ENCODE measurements at regions of chr10 and their contacts with region 1.

Region 1: DNA sequence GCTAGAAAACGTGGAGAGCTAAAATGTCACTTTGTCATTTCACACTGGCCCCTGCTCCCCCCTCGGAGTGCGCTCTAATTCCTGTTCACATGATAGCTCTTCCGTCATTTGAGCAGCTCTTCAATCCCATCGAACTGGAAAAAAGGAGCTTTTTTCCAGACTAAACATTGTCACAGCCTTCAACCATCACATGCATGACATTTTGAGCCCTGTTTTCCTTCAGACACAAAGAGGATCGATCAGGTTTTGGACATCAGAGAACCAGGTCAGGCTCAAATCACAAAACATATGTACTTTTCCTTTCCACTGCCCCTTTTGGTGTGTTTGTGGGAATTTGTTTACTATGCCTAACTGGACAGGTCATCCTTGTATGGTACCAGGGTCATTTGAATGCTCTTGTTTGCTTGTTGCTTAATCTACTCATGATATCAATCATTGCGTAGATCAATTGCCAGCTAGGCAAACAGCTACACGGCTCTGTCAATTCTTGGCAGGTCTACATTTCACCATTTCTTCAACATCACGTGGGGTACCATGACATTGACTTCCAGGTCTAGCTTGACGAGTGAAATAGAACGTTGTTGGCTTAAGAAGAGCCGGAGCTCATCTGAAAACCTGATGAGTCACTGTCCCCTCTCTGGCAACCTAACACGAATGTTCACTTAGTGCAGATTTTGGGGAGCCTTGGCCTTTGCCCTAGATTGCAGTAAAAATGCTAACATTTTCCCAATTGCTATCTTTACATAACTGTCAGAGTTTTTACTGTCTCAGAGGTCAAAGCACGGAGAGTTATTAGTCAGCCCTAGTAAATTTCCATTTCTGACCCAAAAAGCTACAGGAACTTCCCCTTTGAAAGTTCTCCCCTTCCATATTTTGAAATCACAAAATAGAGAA is 87.3 kb downstream of the LYZL2 start:
- DNase-seq: peak; percentile 96
- ATAC-seq: peak; percentile 87
- H3K4me3 ChIP-seq: peak overlapping the region; percentile 3 to 27 (median 17); a peak in 4 of 6 replicates
- H3K27ac ChIP-seq: peak overlapping the region; percentile 91
- H3K4me1 ChIP-seq: peaks cover 72% of the 10 kb centered on the region
- H3K27me3 ChIP-seq: no peaks in the 10 kb centered on the region
- CTCF ChIP-seq: no peak
- EP300 ChIP-seq: peak; percentile 78 to 87; a peak in 3 of 4 replicates
- POLR2A ChIP-seq: no peak
- RAD21 ChIP-seq: no peak

Region 2: DNA sequence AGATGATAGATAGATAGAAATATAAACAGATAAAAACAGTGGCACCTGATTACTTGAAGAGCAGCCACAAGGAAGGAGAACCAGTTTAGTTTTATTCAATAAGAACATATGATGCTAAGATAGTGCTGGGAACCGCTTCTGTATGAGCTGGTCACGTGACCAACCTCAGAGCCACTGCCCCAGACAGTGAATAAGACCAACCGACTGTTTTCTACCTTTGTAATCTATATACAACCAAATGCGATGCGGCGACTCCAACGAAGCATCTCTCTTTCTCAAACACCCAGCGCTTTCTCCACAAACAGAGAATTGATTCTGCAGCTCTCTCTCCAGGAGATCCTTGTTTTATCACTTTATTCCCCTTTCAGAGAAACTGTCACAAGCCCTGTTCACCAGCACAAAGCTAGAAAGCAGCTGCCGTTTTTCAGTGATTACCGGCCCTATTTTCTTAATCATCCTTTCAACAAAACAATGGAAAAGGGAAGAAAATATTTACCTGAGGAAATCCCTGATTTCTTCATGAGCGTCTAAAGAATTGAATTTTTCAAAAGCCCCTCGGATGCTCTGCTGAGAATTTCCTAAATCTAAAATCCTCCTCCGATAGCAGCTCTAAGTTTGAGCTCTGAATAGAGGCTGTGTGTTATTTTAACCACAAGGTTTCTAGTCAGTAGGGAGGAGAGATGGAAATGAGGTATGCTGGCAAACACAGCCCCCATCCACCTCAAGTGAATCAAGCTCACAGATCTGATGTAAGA is 427.2 kb before region 1 on chr10:
- CTCF ChIA-PET with region 1: no interaction called
- POLR2A ChIA-PET with region 1: no interaction called
- in situ Hi-C with region 1: no loop called
- intact Hi-C with region 1: no loop called
- DNase-seq: no peak
- ATAC-seq: no peak
- H3K4me3 ChIP-seq: no peak overlapping the region
- H3K27ac ChIP-seq: no peak overlapping the region
- H3K4me1 ChIP-seq: no peaks in the 10 kb centered on the region
- H3K27me3 ChIP-seq: no peaks in the 10 kb centered on the region
- CTCF ChIP-seq: no peak
- EP300 ChIP-seq: no peak
- POLR2A ChIP-seq: no peak
- RAD21 ChIP-seq: no peak

Region 3: GRCh38 chr10:30433730-30434272 is 108.4 kb before region 1 on chr10 and contains the start of gene MAP3K8:
- CTCF ChIA-PET with region 1: no interaction called
- POLR2A ChIA-PET with region 1: interaction called, 27 read pairs
- in situ Hi-C with region 1: no loop called
- intact Hi-C with region 1: no loop called
- DNase-seq: peak; percentile 89
- ATAC-seq: peak; percentile 89
- H3K4me3 ChIP-seq: peak within 1 kb of the TSS; percentile 93 to 97 (median 96)
- H3K27ac ChIP-seq: peak within 1 kb of the TSS; percentile 97
- H3K4me1 ChIP-seq: peaks cover 50% of the 10 kb centered on the region
- H3K27me3 ChIP-seq: no peaks in the 10 kb centered on the region; a peak in 1 of 5 replicates
- CTCF ChIP-seq: peak; percentile 22; the same call in 1 of the 2 replicates
- EP300 ChIP-seq: peak in 1 of 2 experiments; percentile 42; a peak in 2 of 4 replicates
- POLR2A ChIP-seq: peak; percentile 77 to 78
- RAD21 ChIP-seq: peak; percentile 52; the same call in 1 of the 2 replicates
- total RNA-seq, gene MAP3K8: 19.3 and 21.8 TPM in 2 replicates

Region 4: GRCh38 chr10:30527623-30528428 is 14.4 kb before region 1 on chr10:
- CTCF ChIA-PET with region 1: no interaction called
- POLR2A ChIA-PET with region 1: interaction called, 15 read pairs
- in situ Hi-C with region 1: no loop called
- intact Hi-C with region 1: no loop called
- DNase-seq: peak; percentile 84
- ATAC-seq: peak; percentile 90
- H3K4me3 ChIP-seq: peak overlapping the region in 2 of 3 experiments; percentile 23 to 28; a peak in 1 of 6 replicates
- H3K27ac ChIP-seq: peak overlapping the region; percentile 45
- H3K4me1 ChIP-seq: peaks cover 62% of the 10 kb centered on the region
- H3K27me3 ChIP-seq: no peaks in the 10 kb centered on the region; a peak in 1 of 5 replicates
- CTCF ChIP-seq: peak; percentile 32; the same call in 1 of the 2 replicates
- EP300 ChIP-seq: peak in 1 of 2 experiments; percentile 82; a peak in 2 of 4 replicates
- POLR2A ChIP-seq: no peak
- RAD21 ChIP-seq: no peak

Region 5: DNA sequence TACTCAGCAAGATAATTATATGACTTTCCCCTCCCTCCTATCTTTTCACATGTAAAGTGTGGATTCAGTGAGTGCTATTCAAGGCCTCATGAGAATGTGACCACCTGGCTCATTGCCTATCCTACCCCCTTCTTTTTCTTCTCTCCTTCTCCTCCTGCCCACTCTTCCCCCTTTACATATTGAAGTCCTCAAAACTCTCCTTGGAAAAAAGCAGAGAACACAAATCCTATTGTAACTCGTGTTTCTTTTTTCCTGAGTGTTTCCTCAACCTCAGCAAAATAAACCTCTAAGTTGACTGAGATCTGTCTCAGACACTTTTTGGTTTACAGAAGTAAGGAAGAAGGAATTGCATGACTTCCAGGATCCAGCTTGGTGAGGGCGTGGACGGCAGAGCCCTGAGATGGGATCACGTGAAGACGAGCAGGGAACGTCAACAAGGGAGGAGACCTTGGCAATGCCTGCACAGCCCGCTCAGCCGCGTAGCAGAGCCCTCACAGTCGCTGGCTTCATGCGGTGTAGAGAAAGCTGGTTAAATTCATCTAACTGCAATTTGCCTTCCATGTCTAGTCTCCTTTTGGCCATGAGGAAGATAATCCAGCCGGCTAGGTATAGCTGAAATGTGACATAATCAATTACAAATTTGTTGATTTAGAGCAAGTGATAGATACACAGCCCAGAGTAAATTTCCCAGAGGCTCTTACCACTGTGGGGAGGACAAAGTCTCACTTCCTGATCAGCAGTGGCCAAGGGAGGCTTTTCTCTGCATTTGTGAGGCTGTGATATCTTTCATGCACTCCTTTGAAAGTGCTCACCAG is 11.6 kb after region 1 on chr10:
- CTCF ChIA-PET with region 1: no interaction called
- POLR2A ChIA-PET with region 1: interaction called, 24 read pairs
- in situ Hi-C with region 1: no loop called
- intact Hi-C with region 1: no loop called
- DNase-seq: peak; percentile 57
- ATAC-seq: peak; percentile 96
- H3K4me3 ChIP-seq: peak overlapping the region; percentile 2 to 63 (median 41)
- H3K27ac ChIP-seq: peak overlapping the region; percentile 49
- H3K4me1 ChIP-seq: peaks cover 45% of the 10 kb centered on the region
- H3K27me3 ChIP-seq: no peaks in the 10 kb centered on the region
- CTCF ChIP-seq: no peak
- EP300 ChIP-seq: no peak
- POLR2A ChIP-seq: peak; percentile 52 to 66
- RAD21 ChIP-seq: no peak

Region 6: DNA sequence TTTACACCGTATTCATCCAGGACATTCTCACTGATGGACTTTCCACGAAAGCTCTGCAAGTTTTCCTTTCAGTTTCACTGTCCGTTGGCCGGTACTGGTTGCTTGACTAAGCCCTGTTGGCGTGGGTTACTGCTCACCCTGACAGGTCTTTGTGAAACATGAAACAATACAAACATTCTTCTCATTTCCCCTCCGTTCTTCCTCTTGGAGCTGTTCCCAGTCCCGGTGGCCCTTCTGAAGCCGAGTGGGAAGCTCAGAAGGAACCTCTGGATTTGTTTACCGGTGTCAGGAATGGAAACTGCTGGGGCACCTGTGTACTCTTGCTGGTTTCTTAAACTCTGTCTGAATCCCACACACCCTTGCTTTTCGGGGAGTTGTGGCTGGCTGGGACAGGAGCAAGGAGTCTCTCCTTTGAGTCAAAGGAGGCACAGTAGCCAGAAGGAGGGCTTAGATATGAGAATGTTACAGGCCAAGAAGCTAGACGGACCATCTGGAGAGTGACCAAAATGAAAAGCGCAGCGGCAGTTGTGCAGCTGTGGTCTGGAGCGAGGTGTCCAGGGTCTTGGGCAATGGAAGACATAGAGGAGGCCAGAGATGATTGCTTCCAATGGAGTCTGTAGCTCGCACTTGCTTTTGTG is 41.6 kb after region 1 on chr10:
- CTCF ChIA-PET with region 1: no interaction called
- POLR2A ChIA-PET with region 1: interaction called, 10 read pairs
- in situ Hi-C with region 1: no loop called
- intact Hi-C with region 1: loop called (anchors 2 kb)
- DNase-seq: peak; percentile 84
- ATAC-seq: peak; percentile 84
- H3K4me3 ChIP-seq: peak overlapping the region; percentile 55 to 59 (median 57)
- H3K27ac ChIP-seq: peak overlapping the region; percentile 30
- H3K4me1 ChIP-seq: peaks cover 81% of the 10 kb centered on the region
- H3K27me3 ChIP-seq: no peaks in the 10 kb centered on the region
- CTCF ChIP-seq: peak; percentile 3; the same call in 1 of the 2 replicates
- EP300 ChIP-seq: peak in 1 of 2 experiments; percentile 43; a peak in 1 of 4 replicates
- POLR2A ChIP-seq: no peak
- RAD21 ChIP-seq: no peak

Region 7: GRCh38 chr10:30606313-30606712 is 64.1 kb after region 1 on chr10:
- CTCF ChIA-PET with region 1: no interaction called
- POLR2A ChIA-PET with region 1: interaction called, 17 read pairs
- in situ Hi-C with region 1: no loop called
- intact Hi-C with region 1: no loop called
- DNase-seq: peak; percentile 48
- ATAC-seq: peak; percentile 10; the same call in 2 of the 3 replicates
- H3K4me3 ChIP-seq: peak overlapping the region in 1 of 3 experiments; percentile 26; a peak in 1 of 6 replicates
- H3K27ac ChIP-seq: peak overlapping the region; percentile 97
- H3K4me1 ChIP-seq: peaks cover 96% of the 10 kb centered on the region
- H3K27me3 ChIP-seq: no peaks in the 10 kb centered on the region
- CTCF ChIP-seq: no peak
- EP300 ChIP-seq: no peak
- POLR2A ChIP-seq: no peak
- RAD21 ChIP-seq: no peak